Posterior cingulate gyrus (tissue), 11 donors: ENCODE measurements at regions of chr2 and their contacts with region 1.

Region 1: DNA sequence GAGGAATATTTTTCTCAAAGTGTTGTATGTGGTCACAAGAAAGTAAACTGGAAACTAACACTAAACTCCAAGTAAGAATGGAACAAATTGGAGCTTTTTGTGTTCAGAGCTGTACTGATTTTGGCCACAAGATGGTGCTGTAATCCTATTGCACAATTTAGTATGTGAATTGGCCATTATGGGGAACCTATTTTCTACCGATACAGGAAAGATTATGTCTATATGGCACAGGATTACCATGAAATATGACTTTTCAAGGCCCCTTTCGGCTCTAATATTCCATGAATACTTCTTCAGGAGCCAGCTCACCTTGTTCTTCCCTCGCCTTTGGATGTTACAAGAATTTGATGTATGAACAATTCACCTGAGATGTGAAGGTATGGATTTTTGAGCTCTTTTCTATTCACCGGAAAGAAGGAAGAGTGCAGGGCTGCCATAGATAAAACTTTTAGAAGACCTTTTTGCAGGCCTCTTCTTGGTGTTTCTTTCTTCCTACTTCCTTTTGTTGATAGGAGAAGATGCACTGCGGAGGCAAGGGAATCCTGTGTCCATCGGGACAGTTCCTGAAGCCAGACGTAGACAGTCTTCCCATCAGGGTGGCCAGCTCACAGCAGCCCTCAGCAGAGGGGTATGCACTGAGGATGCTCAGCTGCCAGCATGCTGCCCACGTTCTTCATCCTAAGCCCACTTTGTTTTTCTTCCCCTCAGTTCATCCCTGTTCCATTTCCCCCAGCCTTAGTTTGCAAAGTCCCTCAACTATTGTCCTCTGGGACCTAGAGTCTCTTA is 13.3 kb downstream of the MRPL44 start:
- DNase-seq: peak in 3 of 10 donors; percentile 21 to 47 (median 29)

Region 2: DNA sequence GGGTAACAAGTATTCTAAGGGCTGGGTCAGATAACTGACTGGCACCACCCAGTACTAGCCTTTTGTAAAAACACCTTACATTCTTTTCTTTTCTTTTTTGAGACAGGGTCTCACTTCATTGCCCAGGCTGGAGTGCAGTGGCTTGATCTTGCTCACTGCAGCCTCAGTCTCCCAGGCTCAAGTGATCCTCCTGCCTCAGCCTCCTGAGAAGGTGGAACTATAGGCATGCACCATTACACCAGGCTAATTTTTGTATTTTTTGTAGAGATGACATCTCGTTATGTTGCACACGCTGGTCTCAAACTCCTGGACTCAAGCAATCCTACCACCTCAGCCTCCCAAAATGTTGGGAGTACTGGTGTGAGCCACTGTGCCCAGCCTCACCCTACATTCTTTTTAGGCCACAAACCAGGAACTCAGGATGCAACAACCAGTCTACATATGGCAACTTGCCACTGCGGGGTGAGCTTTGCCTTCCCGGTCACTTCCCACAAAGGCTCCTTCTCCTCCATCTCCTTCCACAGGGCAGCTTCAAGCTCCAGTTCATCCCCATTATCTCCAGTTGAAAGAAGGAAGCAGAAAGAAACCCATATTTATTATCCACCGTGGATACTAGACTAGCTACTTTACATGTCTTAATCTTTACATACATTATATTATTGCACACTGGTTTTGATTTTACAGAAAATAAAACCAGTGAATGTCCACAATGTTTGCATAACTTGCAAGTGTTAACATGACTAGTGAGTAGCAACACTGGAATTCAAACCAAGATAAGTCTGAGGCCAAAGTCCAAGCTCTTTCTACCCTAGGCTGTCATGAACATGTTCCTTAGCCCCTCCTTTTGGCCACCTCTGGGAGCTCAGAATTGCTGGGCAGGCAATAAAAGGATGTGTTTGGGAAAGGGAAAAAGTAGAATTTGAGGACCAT is 109.5 kb before region 1 on chr2:
- intact Hi-C with region 1: no loop called
- DNase-seq: no peak

Region 3: GRCh38 chr2:224260372-224261020 is 290.0 kb after region 1 on chr2:
- intact Hi-C with region 1: no loop called
- DNase-seq: no peak

Region 4: DNA sequence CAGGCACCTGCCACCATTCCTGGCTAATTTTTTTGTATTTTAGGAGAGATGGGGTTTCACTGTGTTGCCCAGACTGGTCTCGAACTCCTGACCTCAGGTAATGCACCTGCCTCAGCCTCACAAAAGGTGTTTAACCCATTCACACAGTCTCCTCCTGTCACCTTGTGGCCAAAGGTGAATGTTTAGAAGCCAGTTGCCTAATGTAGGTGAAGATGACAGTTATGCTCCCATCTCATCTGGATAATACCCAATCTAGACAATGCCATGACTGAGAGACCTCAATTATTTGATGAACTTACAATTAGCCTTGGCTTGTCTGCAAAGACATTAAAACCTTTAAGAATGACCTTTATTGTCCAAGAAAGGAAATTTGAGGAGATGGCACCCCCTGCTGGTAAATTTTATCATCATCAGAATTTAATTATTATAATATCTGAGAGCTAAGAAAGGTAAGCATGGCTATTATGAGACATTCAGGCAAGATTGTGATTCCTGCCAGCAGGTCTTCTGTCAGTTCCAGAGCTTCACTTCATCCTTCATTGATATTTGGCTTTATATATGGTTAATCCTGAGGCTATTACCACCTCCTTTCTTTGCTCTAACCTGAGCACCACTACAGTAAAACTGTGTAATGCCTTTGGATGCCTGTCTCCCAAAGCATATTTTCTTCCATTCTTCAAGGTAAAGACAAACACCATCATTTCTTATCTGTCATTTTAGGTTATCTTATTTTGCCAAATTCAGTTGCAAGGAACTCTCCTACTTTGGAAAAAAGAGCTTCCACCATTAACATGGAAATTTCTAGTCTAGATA is 313.8 kb after region 1 on chr2:
- intact Hi-C with region 1: loop called (anchors 1 kb)
- DNase-seq: no peak

Region 5: GRCh38 chr2:224650815-224651439 is 680.4 kb after region 1 on chr2:
- intact Hi-C with region 1: loop called (anchors 10 kb)
- DNase-seq: no peak

Region 6: DNA sequence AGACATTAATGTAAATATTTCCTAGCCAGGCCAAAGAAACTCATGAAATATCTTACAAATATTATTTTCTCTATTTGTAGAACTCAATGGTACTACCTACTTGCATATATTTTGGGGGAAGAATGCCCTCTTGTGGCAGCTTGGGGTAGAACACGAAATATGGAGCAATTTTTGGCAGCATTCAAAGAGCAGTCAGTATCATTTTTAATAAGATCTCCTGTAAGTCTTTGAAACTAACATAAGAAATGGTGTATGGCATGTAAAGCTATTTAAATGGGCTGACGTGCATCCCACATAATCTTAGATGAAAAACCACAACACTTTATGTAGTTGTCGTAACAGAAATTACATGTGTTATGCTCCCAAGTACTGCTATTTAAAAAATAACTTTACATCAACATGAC is 807.9 kb after region 1 on chr2:
- intact Hi-C with region 1: loop called (anchors 5 kb)
- DNase-seq: peak in 5 of 10 donors; percentile 12 to 61 (median 52)